ENCODE measurements at regions of chr4 and their contacts with region 1.

Region 1: GRCh38 chr4:71004281-71004851 is 10.9 kb downstream of the DCK start:
- DNase-seq: peak; percentile 71
- ATAC-seq: peak; percentile 64
- H3K4me3 Mint-ChIP-seq: peak overlapping the region; percentile 58
- H3K27ac Mint-ChIP-seq: peak overlapping the region; percentile 83
- H3K4me1 Mint-ChIP-seq: peaks cover 86% of the 10 kb centered on the region
- H3K27me3 Mint-ChIP-seq: no peaks in the 10 kb centered on the region

Region 2: DNA sequence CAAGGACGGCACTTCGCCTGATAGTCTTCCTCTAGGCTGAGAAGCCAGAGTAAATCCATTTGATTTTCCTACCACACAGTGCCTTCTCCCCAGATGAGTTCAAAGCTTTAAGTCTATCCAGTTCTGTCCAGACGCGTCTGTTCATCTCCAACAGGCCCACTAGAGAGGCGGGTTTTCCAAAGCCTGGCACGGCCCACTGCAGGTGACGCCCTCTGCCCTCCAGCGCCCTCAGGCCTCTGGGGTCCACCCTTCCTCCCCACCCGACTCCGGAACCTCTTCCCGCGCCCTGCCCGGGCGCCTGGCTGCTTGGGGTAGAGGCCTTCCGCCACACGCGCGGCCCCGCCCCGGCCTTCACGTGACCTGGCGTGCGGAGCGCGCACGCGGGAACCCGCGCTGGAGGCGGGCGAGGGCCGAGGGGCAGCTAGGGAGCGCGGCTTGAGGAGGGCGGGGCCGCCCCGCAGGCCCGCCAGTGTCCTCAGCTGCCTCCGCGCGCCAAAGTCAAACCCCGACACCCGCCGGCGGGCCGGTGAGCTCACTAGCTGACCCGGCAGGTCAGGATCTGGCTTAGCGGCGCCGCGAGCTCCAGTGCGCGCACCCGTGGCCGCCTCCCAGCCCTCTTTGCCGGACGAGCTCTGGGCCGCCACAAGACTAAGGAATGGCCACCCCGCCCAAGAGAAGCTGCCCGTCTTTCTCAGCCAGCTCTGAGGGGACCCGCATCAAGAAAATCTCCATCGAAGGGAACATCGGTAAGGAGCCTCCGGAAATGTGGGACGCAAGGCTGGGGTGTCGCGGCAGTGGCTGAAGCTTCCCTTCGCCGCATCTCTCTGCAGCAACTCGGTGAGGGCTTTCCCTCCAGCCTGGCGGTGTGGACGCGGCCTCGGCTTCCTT is 10.9 kb before region 1 on chr4 and contains the start of gene DCK:
- CTCF ChIA-PET with region 1: interaction called, 58 read pairs
- POLR2A ChIA-PET with region 1: interaction called, 20 read pairs
- DNase-seq: peak; percentile 86
- ATAC-seq: peak; percentile 86
- H3K4me3 Mint-ChIP-seq: peak within 1 kb of the TSS; percentile 96
- H3K27ac Mint-ChIP-seq: peak within 1 kb of the TSS; percentile 88
- H3K4me1 Mint-ChIP-seq: peaks cover 38% of the 10 kb centered on the region
- H3K27me3 Mint-ChIP-seq: no peaks in the 10 kb centered on the region
- total RNA-seq, gene DCK: 74.2 to 77.3 TPM

Region 3: GRCh38 chr4:71156616-71157015 is 152.2 kb after region 1 on chr4:
- CTCF ChIA-PET with region 1: no interaction called
- POLR2A ChIA-PET with region 1: no interaction called
- DNase-seq: no peak
- ATAC-seq: no peak
- H3K4me3 Mint-ChIP-seq: no peak overlapping the region
- H3K27ac Mint-ChIP-seq: no peak overlapping the region
- H3K4me1 Mint-ChIP-seq: no peaks in the 10 kb centered on the region
- H3K27me3 Mint-ChIP-seq: peaks cover 12% of the 10 kb centered on the region

Measured in activated CD8-positive, alpha-beta T cell treated with anti-CD3 and anti-CD28 coated beads, Interleukin-2, amount 10 ng/mL, durations not matched to agents 7 days and 5 days (primary cell).